ENCODE measurements at regions of chr16 and their contacts with region 1.

Region 1: DNA sequence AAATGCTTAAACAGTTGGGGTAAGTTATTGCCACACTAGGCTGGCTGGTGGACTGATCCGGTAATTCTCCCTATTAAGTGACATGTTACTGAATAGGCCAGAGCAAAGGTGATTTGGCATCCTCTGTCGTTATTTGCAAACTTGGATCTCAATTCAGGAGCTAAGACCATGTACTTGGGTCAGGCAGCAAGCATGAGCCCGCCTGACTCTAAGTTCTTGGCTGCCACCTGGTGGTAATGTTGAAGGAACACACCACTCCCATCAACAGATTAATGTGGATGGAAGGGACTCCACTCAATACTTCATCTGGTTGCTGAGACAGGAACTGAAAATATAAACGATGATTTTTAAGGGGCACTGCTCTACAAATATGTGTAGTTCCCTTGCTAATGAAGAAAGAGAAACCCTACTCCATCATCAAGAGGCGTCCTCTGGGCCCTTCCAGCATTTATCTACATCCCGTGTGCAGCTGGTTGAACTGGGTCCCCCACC is 70.8 kb downstream of the EMP2 start:
- DNase-seq: peak; percentile 71 to 80
- H3K4me3 ChIP-seq: no peak overlapping the region
- H3K4me1 ChIP-seq: no peaks in the 10 kb centered on the region
- H3K27me3 ChIP-seq: no peaks in the 10 kb centered on the region

Region 2: DNA sequence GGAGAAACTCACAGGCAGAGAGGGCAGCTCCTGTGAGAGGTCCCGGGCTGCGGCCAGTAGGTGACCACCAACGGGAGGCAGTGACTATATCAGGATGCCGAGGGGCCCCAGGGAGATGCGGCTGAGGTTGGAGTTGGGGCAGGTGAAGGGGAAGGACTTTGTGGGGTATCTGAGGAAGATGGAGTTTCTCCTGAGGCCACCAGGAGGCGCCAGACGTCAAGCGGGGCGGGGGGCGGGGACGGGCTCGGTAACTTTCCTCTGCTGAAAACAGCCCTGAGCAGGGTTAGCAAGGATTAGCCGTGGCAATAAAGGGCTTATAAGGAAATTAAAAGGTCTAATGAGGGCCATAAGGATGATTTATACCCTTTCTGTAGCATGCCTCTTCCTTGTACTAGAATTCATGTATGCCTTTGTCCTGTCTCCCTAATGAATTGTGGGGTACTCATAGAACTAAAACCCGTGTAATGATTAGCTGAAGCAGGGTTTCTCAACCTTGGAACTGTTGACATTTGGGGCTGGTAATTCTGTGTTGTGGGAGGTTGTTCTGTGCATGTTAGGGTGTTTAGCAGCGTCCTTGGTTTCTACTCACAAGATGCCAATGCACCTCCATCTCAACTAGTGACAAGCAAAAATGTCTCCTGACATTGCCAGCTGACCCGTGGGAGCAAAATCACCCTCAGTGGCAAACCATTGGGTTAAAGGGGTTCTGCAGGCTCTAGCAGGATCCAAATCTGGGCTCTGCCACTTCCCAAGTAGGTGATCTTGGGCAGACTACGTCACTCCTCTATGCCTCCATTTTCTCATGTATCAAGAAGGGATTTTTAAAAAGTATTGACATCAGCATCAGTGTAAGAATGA is 252.6 kb before region 1 on chr16:
- in situ Hi-C with region 1: loop called (anchors 5 kb)
- DNase-seq: peak; percentile 48 to 59
- H3K4me3 ChIP-seq: no peak overlapping the region
- H3K4me1 ChIP-seq: no peaks in the 10 kb centered on the region
- H3K27me3 ChIP-seq: no peaks in the 10 kb centered on the region

Region 3: DNA sequence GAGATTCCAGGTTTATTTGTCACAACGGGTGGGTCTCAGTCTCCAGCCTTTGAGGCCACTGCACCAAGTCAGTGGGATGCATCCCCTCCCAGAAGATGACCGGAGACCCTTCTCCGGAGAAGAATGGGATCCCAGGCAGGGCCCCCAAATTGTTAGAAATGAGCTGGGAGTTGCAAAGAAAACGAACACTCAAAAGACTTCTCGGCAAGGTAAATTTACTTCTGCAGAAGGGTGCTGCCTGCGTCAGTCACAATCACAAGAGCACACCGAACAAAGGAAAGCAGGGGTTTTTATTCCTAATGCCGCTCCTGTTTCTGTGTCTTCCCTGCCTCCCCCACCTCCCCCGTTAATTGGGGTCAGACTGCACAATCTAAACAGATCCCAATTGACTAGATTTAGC is 62.3 kb before region 1 on chr16:
- in situ Hi-C with region 1: no loop called
- DNase-seq: no peak
- H3K4me3 ChIP-seq: no peak overlapping the region
- H3K4me1 ChIP-seq: no peaks in the 10 kb centered on the region
- H3K27me3 ChIP-seq: no peaks in the 10 kb centered on the region

Region 4: DNA sequence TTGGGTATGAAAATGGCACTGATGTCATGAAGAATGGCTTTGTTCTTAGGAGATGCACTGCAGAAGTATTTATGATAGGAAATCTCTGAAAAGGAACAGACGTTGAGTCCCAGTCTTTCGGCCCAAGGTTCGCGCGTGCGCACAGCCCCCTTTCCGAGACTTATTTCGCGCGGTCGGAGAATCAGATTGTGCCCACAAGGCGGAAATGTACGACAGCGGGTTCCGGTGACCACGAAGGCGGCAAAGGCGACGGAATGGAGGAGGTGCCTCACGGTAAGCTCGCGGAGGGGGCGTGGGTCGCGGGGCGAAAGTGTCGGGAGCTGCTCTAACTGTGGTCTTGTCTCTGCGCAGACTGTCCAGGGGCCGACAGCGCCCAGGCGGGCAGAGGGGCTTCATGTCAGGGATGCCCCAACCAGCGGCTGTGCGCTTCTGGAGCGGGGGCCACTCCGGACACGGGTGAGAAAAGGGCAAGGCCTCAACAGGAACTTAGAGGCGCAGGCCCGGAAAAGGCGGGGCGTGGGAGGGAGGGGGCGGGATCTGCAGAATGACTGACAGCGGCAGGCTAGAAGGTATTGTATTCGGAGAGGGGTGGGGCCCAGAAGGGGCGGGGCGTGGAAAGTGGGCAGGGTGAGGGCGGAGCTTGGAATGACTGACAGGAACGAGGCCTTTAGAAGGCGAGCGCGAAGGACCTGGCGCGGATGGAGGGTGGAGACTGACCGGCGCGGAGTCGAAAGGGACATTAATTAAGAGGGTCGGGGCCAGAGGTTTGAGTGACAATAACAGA is 234.2 kb after region 1 on chr16 and contains the start of gene NUBP1:
- in situ Hi-C with region 1: loop called (anchors 5 kb)
- DNase-seq: peak; percentile 86 to 98
- H3K4me3 ChIP-seq: peak within 1 kb of the TSS; percentile 71
- H3K4me1 ChIP-seq: peaks cover 10% of the 10 kb centered on the region
- H3K27me3 ChIP-seq: no peaks in the 10 kb centered on the region

Region 5: GRCh38 chr16:10765772-10766171 is 256.2 kb after region 1 on chr16:
- in situ Hi-C with region 1: no loop called
- DNase-seq: no peak
- H3K4me3 ChIP-seq: no peak overlapping the region
- H3K4me1 ChIP-seq: no peaks in the 10 kb centered on the region
- H3K27me3 ChIP-seq: no peaks in the 10 kb centered on the region

Region 6: GRCh38 chr16:10922328-10923145 is 413.0 kb after region 1 on chr16:
- in situ Hi-C with region 1: loop called (anchors 10 kb)
- DNase-seq: no peak
- H3K4me3 ChIP-seq: no peak overlapping the region
- H3K4me1 ChIP-seq: peaks cover 3% of the 10 kb centered on the region
- H3K27me3 ChIP-seq: no peaks in the 10 kb centered on the region

Measured in HAP-1 (cell line).